ENCODE measurements at regions of chr18 and their contacts with region 1.

Region 1: GRCh38 chr18:22536558-22536957 is 118.8 kb upstream of the CTAGE1 start:
- DNase-seq: no peak
- H3K4me3 ChIP-seq: no peak overlapping the region
- H3K4me3 Mint-ChIP-seq: no peak overlapping the region
- H3K27ac ChIP-seq: no peak overlapping the region
- H3K27ac Mint-ChIP-seq: no peak overlapping the region
- H3K4me1 ChIP-seq: no peaks in the 10 kb centered on the region
- H3K4me1 Mint-ChIP-seq: no peaks in the 10 kb centered on the region
- H3K27me3 ChIP-seq: no peaks in the 10 kb centered on the region
- H3K27me3 Mint-ChIP-seq: peaks cover under 1 to 4% of the 10 kb centered on the region in 2 donors

Region 2: GRCh38 chr18:22300665-22301636 is 235.6 kb before region 1 on chr18:
- CTCF ChIA-PET with region 1: no interaction called
- POLR2A ChIA-PET with region 1: no interaction called
- DNase-seq: no peak
- H3K4me3 ChIP-seq: no peak overlapping the region
- H3K4me3 Mint-ChIP-seq: peak overlapping the region in 1 of 7 donors; percentile 42
- H3K27ac ChIP-seq: no peak overlapping the region
- H3K27ac Mint-ChIP-seq: peak overlapping the region in 1 of 8 donors; percentile 57
- H3K4me1 ChIP-seq: no peaks in the 10 kb centered on the region
- H3K4me1 Mint-ChIP-seq: peaks cover 0 to 9% (median 3%) of the 10 kb centered on the region in 3 donors
- H3K27me3 ChIP-seq: no peaks in the 10 kb centered on the region
- H3K27me3 Mint-ChIP-seq: peaks cover 10 to 13% of the 10 kb centered on the region in 2 donors

Region 3: GRCh38 chr18:22477222-22477621 is 59.3 kb before region 1 on chr18:
- CTCF ChIA-PET with region 1: no interaction called
- POLR2A ChIA-PET with region 1: interaction called, 10 read pairs
- DNase-seq: no peak
- H3K4me3 ChIP-seq: no peak overlapping the region
- H3K4me3 Mint-ChIP-seq: no peak overlapping the region
- H3K27ac ChIP-seq: no peak overlapping the region
- H3K27ac Mint-ChIP-seq: no peak overlapping the region
- H3K4me1 ChIP-seq: no peaks in the 10 kb centered on the region
- H3K4me1 Mint-ChIP-seq: no peaks in the 10 kb centered on the region
- H3K27me3 ChIP-seq: no peaks in the 10 kb centered on the region
- H3K27me3 Mint-ChIP-seq: peaks cover 16 to 21% of the 10 kb centered on the region in 2 donors

Measured in CD8-positive, alpha-beta memory T cell (primary cell).